PC-9 (cell line): ENCODE measurements at regions of chr19 and their contacts with region 1.

Region 1: DNA sequence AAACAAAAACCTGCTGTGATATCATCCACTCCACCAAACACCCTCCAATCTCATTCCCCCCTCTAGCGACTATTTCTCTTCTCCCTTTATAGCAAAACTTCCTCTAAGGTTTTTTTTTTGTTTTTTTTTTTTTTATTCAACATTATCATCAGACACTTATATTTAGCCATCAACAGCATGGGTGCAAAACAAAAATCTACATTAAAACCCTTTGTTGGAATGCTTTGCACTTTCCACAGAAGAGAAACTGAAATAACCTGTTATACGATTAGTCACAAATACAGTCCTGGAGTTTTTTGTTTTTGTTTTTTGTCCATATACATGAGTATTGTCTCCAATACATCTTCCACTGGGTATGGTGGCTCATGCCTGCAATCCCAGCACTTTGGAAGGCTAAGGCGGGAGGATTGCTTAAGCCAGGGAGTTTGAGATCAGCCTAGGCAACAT is 25.1 kb downstream of the AP2S1 start:
- DNase-seq: peak in 1 of 2 experiments; percentile 93
- H3K4me3 ChIP-seq: no peak overlapping the region; the same call in 1 of the 2 replicates
- H3K27ac ChIP-seq: peak overlapping the region; percentile 49
- H3K4me1 ChIP-seq: peaks cover 58% of the 10 kb centered on the region
- H3K27me3 ChIP-seq: no peaks in the 10 kb centered on the region
- CTCF ChIP-seq: 0 out of 2 replicates have a peak, but pooled peaks have one; percentile 31

Region 2: DNA sequence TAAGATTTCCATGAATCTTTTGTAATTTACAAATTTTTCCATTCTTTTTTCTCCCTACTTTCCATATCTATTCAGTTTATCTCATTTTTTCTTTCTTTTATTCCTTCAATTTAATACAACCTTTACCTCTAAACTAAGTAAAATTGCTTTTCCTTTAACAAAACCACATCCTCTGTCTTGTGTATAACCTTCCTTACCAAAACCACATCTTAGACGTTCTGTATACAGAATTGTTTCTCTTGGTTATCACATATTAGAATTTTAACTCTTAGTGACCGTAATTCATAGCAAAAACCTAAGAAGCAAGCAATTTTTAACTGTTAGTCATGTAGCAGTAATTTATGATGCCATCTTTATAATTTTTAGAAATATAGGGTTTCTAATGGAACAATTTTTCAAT is 463.6 kb before region 1 on chr19:
- CTCF ChIA-PET with region 1: no interaction called
- POLR2A ChIA-PET with region 1: no interaction called
- intact Hi-C with region 1: no loop called
- DNase-seq: no peak
- H3K4me3 ChIP-seq: no peak overlapping the region
- H3K27ac ChIP-seq: no peak overlapping the region
- H3K4me1 ChIP-seq: no peaks in the 10 kb centered on the region
- H3K27me3 ChIP-seq: no peaks in the 10 kb centered on the region
- CTCF ChIP-seq: no peak

Region 3: DNA sequence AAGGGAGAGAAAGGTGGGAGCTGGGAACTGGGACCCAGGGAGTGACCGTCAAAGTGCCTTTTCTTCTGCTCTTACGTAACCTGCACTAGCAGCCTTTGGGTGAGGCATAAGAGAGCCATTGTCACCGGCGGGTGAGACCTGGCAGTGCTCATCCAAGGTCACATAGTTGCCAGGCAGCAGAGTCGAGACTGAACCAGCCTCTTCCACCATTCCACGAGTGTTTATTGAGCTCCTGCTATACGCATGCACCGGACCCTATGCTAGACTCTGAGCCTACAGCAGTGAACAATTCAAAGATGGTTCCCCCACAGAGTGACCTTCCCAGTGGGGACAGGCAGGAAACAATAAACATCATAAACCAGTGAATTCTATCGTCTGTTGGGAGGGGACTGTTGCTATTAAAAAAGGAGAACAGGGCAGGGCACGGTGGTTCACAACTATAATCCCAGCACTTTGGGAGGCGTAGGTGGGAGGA is 60.7 kb before region 1 on chr19:
- CTCF ChIA-PET with region 1: no interaction called
- POLR2A ChIA-PET with region 1: interaction called, 29 read pairs
- intact Hi-C with region 1: no loop called
- DNase-seq: peak in 1 of 2 experiments; percentile 48
- H3K4me3 ChIP-seq: no peak overlapping the region
- H3K27ac ChIP-seq: no peak overlapping the region
- H3K4me1 ChIP-seq: peaks cover 18% of the 10 kb centered on the region
- H3K27me3 ChIP-seq: no peaks in the 10 kb centered on the region
- CTCF ChIP-seq: no peak

Region 4: DNA sequence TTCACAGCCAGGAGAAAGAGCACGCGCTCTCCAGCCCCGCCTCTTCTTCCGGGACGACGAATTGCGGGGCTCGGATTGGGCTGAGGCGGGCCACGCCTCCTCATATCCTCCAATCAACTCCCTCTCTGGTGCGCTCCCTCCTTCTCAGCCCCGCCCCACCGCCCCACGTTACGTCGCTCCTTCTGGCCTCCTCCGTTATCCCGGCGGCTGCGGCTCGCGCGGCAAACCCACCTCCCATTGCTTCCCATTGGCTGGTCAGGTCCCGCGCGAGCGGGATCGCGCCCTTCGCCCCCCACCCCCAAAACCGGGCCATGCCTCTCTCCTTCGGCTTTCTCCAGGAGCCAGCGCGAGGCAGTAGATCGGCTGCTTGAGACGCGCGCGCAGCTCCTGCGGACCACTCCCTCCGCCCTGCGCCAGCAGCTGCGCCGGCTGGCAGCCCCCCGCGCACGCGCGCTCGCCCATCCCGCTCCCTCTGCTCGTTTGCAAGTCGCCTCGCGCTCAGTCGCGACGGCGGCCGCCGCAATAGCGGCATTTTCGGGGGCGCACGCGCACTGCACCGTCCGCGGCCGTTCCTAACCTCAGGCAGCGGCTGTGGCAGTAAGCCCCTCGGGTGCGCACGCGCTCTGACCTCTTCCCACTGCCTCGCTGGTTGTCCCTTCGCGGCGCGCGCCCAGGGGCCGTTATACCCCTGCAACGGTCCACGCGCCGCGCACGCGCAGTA is 34.7 kb after region 1 on chr19:
- CTCF ChIA-PET with region 1: no interaction called
- POLR2A ChIA-PET with region 1: no interaction called
- intact Hi-C with region 1: no loop called
- DNase-seq: peak; percentile 96 to 99
- H3K4me3 ChIP-seq: peak overlapping the region; percentile 79
- H3K27ac ChIP-seq: peak overlapping the region; percentile 87
- H3K4me1 ChIP-seq: peaks cover 47% of the 10 kb centered on the region
- H3K27me3 ChIP-seq: no peaks in the 10 kb centered on the region
- CTCF ChIP-seq: no peak